Endothelial cell of umbilical vein (primary cell): ENCODE measurements at regions of chr6 and their contacts with region 1.

Region 1: GRCh38 chr6:56595490-56596122 is 47.1 kb downstream of the DST start:
- DNase-seq: peak; percentile 76
- H3K4me3 ChIP-seq: no peak overlapping the region
- H3K27ac ChIP-seq: no peak overlapping the region
- H3K4me1 ChIP-seq: no peaks in the 10 kb centered on the region
- H3K27me3 ChIP-seq: no peaks in the 10 kb centered on the region
- CTCF ChIP-seq: peak; percentile 54 to 61
- POLR2A ChIP-seq: no peak

Region 2: DNA sequence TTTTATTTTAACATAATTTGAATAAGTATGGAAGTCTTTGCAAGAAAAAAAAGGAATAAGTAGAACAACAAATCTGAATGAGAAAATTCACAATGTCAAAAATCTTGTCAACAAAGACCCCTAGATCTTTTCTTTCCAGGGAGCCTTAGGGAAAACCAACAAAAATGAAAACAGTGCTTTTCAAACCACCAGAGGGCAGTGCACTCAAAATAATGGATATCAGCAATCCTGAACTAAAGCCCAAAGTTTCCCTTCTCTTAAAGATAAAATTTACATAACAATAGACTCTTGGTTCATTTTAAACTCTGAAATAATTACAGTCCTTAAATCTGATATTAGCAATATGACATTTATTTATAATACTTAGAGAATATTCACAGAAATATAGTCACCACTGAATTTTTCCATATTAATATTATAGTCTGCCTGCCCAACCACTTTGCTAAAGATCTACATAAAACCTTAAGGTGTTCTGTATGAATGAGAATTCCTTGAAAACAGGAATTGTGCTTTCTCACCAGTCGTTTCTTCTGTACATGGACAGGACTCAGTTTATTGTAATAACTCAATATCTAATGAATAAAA is 614.9 kb before region 1 on chr6:
- CTCF ChIA-PET with region 1: interaction called, 4 read pairs
- POLR2A ChIA-PET with region 1: no interaction called
- dilution Hi-C with region 1: no loop called
- intact Hi-C with region 1: loop called (anchors 10 kb)
- DNase-seq: peak; percentile 66
- H3K4me3 ChIP-seq: no peak overlapping the region
- H3K27ac ChIP-seq: no peak overlapping the region
- H3K4me1 ChIP-seq: no peaks in the 10 kb centered on the region
- H3K27me3 ChIP-seq: no peaks in the 10 kb centered on the region
- CTCF ChIP-seq: peak; percentile 39
- POLR2A ChIP-seq: no peak

Region 3: GRCh38 chr6:56359201-56359899 is 236.3 kb before region 1 on chr6:
- CTCF ChIA-PET with region 1: interaction called, 47 read pairs
- POLR2A ChIA-PET with region 1: no interaction called
- dilution Hi-C with region 1: no loop called
- intact Hi-C with region 1: loop called (anchors 1 kb)
- DNase-seq: peak; percentile 83
- H3K4me3 ChIP-seq: no peak overlapping the region
- H3K27ac ChIP-seq: no peak overlapping the region
- H3K4me1 ChIP-seq: peaks cover 47% of the 10 kb centered on the region
- H3K27me3 ChIP-seq: no peaks in the 10 kb centered on the region
- CTCF ChIP-seq: peak; percentile 55 to 59
- POLR2A ChIP-seq: no peak

Region 4: DNA sequence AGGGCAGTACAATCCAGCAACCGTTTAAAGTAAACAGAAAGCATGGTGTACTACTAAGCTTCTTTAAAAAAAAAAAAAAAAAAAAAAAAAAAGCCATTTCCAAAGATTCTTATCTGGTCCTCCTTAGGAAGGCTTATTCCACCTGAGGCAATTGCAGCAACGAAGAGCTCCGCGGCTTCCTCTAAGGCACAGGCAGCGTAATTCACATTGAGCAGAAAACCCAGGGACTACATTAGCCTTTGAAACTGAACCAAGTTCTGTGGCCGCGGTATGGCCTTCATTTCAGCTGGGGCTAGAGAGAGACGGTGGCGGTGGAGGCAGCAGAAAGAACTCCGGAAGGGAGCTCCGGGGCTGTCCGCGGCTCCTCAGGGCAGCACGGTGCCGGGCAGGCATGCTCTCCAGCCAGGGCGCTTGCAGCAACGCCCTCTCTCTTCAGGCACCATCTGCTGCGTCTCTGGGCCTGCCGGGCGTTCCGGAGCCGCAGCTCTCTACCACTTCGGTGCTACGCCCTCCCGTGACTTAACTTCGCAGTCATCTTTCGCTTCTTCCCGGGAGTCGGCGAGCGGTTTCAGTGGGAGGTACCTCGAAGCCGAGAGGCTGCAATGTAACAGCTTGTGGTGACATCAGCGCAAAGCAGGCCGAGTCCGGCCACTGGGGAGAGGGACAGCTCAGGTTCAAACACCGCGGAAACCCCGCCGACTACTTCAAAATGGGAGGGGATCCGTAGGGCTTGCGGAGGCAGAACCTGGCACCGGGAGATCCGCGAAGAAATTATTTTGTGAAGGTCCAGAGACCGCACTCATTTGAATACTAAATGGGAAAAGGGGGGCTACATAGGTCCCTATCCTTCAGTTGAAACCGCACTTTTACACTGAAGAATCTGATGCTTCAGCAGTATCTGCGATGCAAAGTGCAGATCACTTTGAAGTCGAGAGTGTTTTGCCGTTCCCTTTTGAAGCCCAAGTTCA is 53.0 kb before region 1 on chr6:
- CTCF ChIA-PET with region 1: interaction called, 17 read pairs
- POLR2A ChIA-PET with region 1: no interaction called
- dilution Hi-C with region 1: no loop called
- intact Hi-C with region 1: no loop called
- DNase-seq: peak; percentile 97
- H3K4me3 ChIP-seq: peak overlapping the region; percentile 41 to 84 (median 66)
- H3K27ac ChIP-seq: peak overlapping the region; percentile 80
- H3K4me1 ChIP-seq: peaks cover 41% of the 10 kb centered on the region
- H3K27me3 ChIP-seq: no peaks in the 10 kb centered on the region
- CTCF ChIP-seq: peak in 1 of 2 donors; percentile 22
- POLR2A ChIP-seq: peak; percentile 82

Region 5: GRCh38 chr6:56575736-56576135 is 19.9 kb before region 1 on chr6:
- CTCF ChIA-PET with region 1: interaction called, 60 read pairs
- POLR2A ChIA-PET with region 1: no interaction called
- dilution Hi-C with region 1: no loop called
- intact Hi-C with region 1: no loop called
- DNase-seq: no peak
- H3K4me3 ChIP-seq: no peak overlapping the region
- H3K27ac ChIP-seq: no peak overlapping the region
- H3K4me1 ChIP-seq: peaks cover 5% of the 10 kb centered on the region
- H3K27me3 ChIP-seq: no peaks in the 10 kb centered on the region
- CTCF ChIP-seq: no peak
- POLR2A ChIP-seq: no peak

Region 6: DNA sequence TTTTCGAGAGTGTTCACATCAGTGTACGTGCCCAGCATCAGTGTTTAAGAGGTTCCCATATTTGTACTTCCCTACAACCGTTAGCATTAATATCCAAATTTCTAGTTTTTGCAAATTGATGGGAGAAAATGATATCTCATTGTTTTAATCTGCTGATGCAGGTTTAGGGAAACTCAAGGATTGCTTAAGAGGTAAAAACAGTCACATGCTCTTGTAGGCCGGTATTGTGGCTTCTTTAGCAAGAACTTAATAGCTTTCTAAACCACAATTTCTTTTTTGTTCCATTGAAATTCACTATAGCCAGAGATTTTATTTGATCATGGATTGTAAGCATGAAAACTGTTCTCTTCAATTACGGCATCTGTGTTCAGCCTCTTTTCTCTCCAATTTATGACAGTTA is 388.8 kb after region 1 on chr6:
- CTCF ChIA-PET with region 1: no interaction called
- POLR2A ChIA-PET with region 1: no interaction called
- dilution Hi-C with region 1: no loop called
- intact Hi-C with region 1: no loop called
- DNase-seq: no peak
- H3K4me3 ChIP-seq: no peak overlapping the region
- H3K27ac ChIP-seq: no peak overlapping the region
- H3K4me1 ChIP-seq: no peaks in the 10 kb centered on the region
- H3K27me3 ChIP-seq: peaks cover 2 to 3% of the 10 kb centered on the region in 2 experiments
- CTCF ChIP-seq: no peak
- POLR2A ChIP-seq: no peak